ENCODE measurements at regions of chr19 and their contacts with region 1.

Region 1: DNA sequence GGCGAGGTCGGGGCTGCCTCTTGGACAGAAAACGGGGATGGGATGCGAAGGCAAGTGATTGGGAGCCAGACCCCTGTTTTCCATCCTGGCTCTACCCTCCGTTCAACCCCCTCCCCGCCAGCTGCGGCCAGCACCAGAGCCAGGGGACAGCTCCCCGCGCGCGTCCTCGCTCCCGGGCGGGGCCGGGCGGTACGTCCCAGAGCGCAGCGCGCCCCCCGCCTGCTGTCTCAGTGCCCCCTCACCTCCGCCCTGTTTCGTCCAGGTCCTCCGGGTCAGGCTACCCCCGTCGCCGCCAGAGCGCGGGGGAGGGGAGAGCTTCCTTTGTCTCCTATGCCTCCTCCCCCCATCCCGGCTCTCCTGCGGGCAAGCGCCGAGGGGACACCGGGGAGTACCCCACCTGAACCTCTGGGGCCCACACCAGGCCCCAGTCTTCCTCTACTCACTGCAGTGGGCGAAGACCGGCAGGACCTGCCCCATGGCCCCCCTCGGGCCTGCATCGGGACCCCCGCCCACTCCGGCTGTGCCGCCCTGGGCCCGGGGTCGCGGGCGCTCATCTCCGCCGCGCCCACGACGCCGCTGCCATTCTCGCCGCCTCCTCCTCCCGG is 396 bp downstream of the RTN2 start:
- DNase-seq: peak; percentile 53
- ATAC-seq: peak; percentile 10
- H3K4me3 Mint-ChIP-seq: peak overlapping the region; percentile 85
- H3K27ac Mint-ChIP-seq: no peak overlapping the region
- H3K4me1 Mint-ChIP-seq: peaks cover 45% of the 10 kb centered on the region
- H3K27me3 Mint-ChIP-seq: peaks cover 12% of the 10 kb centered on the region
- CTCF ChIP-seq: no peak

Region 2: DNA sequence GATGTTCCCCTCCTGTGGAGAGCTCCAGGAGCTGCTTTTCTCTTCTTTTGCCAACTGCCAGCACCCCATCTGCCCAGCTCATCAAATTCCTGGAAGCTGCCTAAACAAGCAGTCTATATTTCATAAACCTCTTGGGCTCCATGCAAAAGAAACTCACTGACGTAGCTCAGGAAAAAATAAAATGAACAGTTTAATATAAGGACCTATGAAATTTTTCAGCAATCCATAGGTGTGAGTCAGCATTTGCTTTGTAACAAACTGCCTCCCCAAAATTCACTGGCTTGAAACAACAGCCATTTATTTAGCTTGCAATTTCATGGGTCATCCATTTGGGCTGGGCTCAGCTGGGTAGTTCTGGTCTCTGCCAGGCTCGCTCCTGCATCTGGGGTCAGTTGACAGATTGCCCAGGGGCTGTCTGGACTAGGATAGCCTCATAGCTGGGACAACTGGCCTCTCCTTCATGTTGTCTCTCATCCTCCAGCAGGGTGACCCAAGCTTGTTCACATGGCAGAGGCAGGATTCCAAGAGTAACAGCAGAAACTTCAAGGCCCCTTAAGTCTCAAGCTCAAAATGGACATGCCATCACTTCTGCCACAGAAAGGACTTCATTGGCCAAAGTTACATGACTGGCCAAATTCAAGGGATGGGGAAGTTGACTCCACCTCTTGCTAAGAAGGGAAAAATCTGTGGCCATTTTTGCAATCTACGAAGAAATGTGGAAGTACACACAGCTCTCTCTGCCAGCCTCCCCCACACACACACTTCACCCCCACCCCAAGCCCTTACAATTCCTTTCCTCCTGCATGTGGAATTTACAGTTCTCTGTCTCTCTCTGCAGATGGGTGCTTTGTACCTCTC is 860.6 kb before region 1 on chr19:
- CTCF ChIA-PET with region 1: no interaction called
- POLR2A ChIA-PET with region 1: no interaction called
- intact Hi-C with region 1: no loop called
- DNase-seq: no peak
- ATAC-seq: no peak
- H3K4me3 Mint-ChIP-seq: no peak overlapping the region
- H3K27ac Mint-ChIP-seq: no peak overlapping the region
- H3K4me1 Mint-ChIP-seq: no peaks in the 10 kb centered on the region
- H3K27me3 Mint-ChIP-seq: peaks cover 21% of the 10 kb centered on the region
- CTCF ChIP-seq: no peak

Region 3: GRCh38 chr19:45234089-45234869 is 262.2 kb before region 1 on chr19:
- CTCF ChIA-PET with region 1: no interaction called
- POLR2A ChIA-PET with region 1: no interaction called
- intact Hi-C with region 1: no loop called
- DNase-seq: no peak
- ATAC-seq: no peak
- H3K4me3 Mint-ChIP-seq: no peak overlapping the region
- H3K27ac Mint-ChIP-seq: no peak overlapping the region
- H3K4me1 Mint-ChIP-seq: peaks cover 12% of the 10 kb centered on the region
- H3K27me3 Mint-ChIP-seq: peaks cover 31% of the 10 kb centered on the region
- CTCF ChIP-seq: no peak

Region 4: DNA sequence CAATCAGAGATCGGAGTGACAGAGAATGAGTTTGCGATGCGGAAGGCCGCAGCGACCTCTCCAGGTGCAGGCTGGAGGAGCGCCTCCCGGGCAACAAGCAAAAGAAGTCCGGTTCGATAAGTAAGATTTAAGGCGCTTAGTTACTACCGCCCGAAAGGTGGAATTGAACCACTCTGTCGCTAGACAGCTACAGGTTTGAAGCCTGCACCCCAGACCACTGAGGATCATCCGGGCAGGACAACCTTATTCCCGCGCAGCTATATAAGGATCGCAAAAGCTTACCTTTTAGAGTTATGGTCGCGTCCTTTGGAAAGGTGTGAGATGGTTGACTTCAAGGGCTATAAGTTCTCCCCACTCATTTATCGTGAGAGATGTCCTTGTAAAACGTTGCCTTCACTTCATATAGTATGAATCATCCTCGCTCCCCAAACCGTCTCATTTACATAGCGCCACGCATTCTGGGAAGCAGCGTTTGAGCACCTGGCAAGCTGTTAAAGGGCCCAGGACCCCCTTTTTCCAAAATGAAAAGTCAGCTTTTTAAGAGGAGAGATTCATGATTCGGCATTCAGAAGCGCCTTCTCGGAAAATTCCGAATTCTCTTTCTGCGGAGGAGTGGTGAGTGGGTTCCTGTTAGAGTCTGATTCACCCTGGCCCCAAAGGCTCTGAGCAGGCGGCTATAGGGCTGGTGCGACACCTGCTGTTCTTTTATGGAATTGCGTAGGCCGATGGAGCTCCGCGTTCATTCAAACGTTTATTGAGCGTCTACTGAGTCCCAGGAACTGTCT is 17.8 kb before region 1 on chr19:
- CTCF ChIA-PET with region 1: interaction called, 13 read pairs
- POLR2A ChIA-PET with region 1: interaction called, 8 read pairs
- intact Hi-C with region 1: no loop called
- DNase-seq: peak; percentile 79
- ATAC-seq: peak; percentile 81
- H3K4me3 Mint-ChIP-seq: peak overlapping the region; percentile 89
- H3K27ac Mint-ChIP-seq: peak overlapping the region; percentile 97
- H3K4me1 Mint-ChIP-seq: peaks cover 21% of the 10 kb centered on the region
- H3K27me3 Mint-ChIP-seq: peaks cover 14% of the 10 kb centered on the region
- CTCF ChIP-seq: peak; percentile 72

Region 5: GRCh38 chr19:45515081-45515624 is 18.7 kb after region 1 on chr19:
- CTCF ChIA-PET with region 1: interaction called, 5 read pairs
- POLR2A ChIA-PET with region 1: interaction called, 11 read pairs
- intact Hi-C with region 1: loop called (anchors 2 kb)
- DNase-seq: peak; percentile 62
- ATAC-seq: peak; percentile 79
- H3K4me3 Mint-ChIP-seq: peak overlapping the region; percentile 67
- H3K27ac Mint-ChIP-seq: peak overlapping the region; percentile 92
- H3K4me1 Mint-ChIP-seq: peaks cover 67% of the 10 kb centered on the region
- H3K27me3 Mint-ChIP-seq: no peaks in the 10 kb centered on the region
- CTCF ChIP-seq: no peak

Region 6: GRCh38 chr19:45558399-45558878 is 62.0 kb after region 1 on chr19:
- CTCF ChIA-PET with region 1: interaction called, 5 read pairs
- POLR2A ChIA-PET with region 1: no interaction called
- intact Hi-C with region 1: loop called (anchors 1 kb)
- DNase-seq: peak; percentile 26
- ATAC-seq: peak; percentile 99
- H3K4me3 Mint-ChIP-seq: no peak overlapping the region
- H3K27ac Mint-ChIP-seq: no peak overlapping the region
- H3K4me1 Mint-ChIP-seq: peaks cover 25% of the 10 kb centered on the region
- H3K27me3 Mint-ChIP-seq: no peaks in the 10 kb centered on the region
- CTCF ChIP-seq: no peak

Region 7: GRCh38 chr19:45730389-45731288 is 234.2 kb after region 1 on chr19 and contains the start of gene FBXO46:
- CTCF ChIA-PET with region 1: no interaction called
- POLR2A ChIA-PET with region 1: interaction called, 10 read pairs
- intact Hi-C with region 1: no loop called
- DNase-seq: peak; percentile 86
- ATAC-seq: peak; percentile 98
- H3K4me3 Mint-ChIP-seq: peak within 1 kb of the TSS; percentile 95
- H3K27ac Mint-ChIP-seq: peak within 1 kb of the TSS; percentile 93
- H3K4me1 Mint-ChIP-seq: peaks cover 25% of the 10 kb centered on the region
- H3K27me3 Mint-ChIP-seq: no peaks in the 10 kb centered on the region
- CTCF ChIP-seq: no peak
- total RNA-seq, gene FBXO46: 36.3 and 44.0 TPM in 2 replicates

Region 8: GRCh38 chr19:45770192-45771101 is 274.0 kb after region 1 on chr19:
- CTCF ChIA-PET with region 1: no interaction called
- POLR2A ChIA-PET with region 1: no interaction called
- intact Hi-C with region 1: no loop called
- DNase-seq: peak; percentile 93
- ATAC-seq: peak; percentile 69
- H3K4me3 Mint-ChIP-seq: peak overlapping the region; percentile 89
- H3K27ac Mint-ChIP-seq: peak overlapping the region; percentile 88
- H3K4me1 Mint-ChIP-seq: peaks cover 19% of the 10 kb centered on the region
- H3K27me3 Mint-ChIP-seq: peaks cover 3% of the 10 kb centered on the region
- CTCF ChIP-seq: peak; percentile 71